Activated CD4-positive, alpha-beta T cell treated with anti-CD3 and anti-CD28 coated beads, Interleukin-2, amount 10 ng/mL, durations not matched to agents 24 days and 14 days (primary cell): ENCODE measurements at regions of chr12 and their contacts with region 1.

Region 1: DNA sequence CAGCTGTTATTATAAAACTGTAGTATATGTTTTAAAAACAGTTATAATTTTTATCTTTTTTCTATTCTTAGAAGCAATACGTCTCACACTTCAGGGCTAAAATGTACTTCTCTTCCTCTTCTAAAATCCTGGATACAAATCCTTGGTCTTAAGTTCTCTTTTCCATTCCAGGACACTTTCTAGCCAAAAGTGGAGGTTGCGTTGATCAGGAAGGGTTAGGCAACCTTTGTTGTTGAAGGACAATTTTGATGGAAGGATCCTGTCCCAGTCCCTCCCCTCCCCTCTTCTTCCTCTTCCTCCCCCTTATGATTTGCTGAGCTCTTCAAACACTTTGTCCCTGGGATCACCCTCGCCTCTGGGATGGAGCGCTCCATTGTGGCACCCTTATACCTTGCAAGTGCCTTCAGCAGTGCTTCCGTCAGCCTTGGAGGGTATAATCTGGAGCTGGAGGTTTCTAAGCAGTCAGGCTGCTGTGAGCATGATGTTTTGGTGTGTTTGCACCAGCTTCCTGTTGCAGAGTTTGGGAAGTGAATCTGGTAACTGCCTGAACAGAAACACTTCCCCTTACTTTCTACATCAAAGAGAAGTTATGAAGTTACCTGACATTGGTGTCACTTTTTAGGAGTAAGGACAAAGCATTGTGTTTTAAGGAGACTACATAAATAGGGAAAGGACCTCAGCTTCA is 87.4 kb upstream of the SLC38A2 start:
- DNase-seq: peak; percentile 81
- H3K4me3 Mint-ChIP-seq: peak overlapping the region; percentile 85
- H3K27ac Mint-ChIP-seq: peak overlapping the region; percentile 99
- H3K4me1 Mint-ChIP-seq: peaks cover 53% of the 10 kb centered on the region
- H3K27me3 Mint-ChIP-seq: no peaks in the 10 kb centered on the region

Region 2: GRCh38 chr12:46217541-46218321 is 242.3 kb before region 1 on chr12:
- intact Hi-C with region 1: loop called (anchors 5 kb)
- DNase-seq: peak; percentile 92
- H3K4me3 Mint-ChIP-seq: peak overlapping the region; percentile 79
- H3K27ac Mint-ChIP-seq: peak overlapping the region; percentile 98
- H3K4me1 Mint-ChIP-seq: peaks cover 88% of the 10 kb centered on the region
- H3K27me3 Mint-ChIP-seq: no peaks in the 10 kb centered on the region

Region 3: DNA sequence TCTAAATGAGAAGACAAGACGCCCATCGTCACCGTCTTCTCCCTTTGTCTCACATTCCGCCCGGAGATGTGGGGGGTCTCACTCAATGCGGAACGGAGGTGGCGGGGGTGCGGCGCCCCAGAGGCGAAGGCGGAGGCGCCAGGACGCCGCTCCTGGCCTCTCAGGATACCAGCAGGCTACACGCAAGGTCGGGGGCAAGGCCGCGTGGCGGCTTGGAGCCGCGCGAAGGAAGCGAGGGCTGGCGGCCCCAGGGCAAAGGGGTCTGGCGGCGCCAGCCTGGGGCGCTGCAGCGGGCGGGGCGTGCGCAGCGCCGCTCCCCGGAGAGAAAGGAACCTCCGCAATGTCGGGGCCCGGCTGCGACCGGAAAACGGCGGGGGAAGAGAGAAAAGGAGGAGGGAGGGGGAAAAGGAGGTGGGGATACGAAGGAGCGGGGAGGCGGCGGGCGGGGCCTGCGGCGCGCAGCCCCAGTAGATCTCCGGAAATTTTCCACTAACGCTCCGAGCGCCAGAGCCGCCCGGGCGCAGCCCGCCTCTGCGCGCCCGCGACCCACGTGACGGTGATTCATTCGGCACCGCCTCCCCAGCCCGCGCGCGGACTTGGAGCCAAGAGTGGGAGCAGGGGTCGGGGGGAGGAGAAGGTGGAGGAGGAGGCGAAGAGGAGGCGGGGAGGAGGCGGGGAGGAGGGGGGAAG is 76.9 kb before region 1 on chr12:
- intact Hi-C with region 1: loop called (anchors 1 kb)
- DNase-seq: peak; percentile 99
- H3K4me3 Mint-ChIP-seq: peak overlapping the region; percentile 83
- H3K27ac Mint-ChIP-seq: peak overlapping the region; percentile 98
- H3K4me1 Mint-ChIP-seq: peaks cover 36% of the 10 kb centered on the region
- H3K27me3 Mint-ChIP-seq: no peaks in the 10 kb centered on the region

Region 4: GRCh38 chr12:46516933-46517578 is 57.1 kb after region 1 on chr12:
- intact Hi-C with region 1: loop called (anchors 1 kb)
- DNase-seq: peak; percentile 83
- H3K4me3 Mint-ChIP-seq: peak overlapping the region; percentile 80
- H3K27ac Mint-ChIP-seq: peak overlapping the region; percentile 95
- H3K4me1 Mint-ChIP-seq: peaks cover 71% of the 10 kb centered on the region
- H3K27me3 Mint-ChIP-seq: no peaks in the 10 kb centered on the region

Region 5: DNA sequence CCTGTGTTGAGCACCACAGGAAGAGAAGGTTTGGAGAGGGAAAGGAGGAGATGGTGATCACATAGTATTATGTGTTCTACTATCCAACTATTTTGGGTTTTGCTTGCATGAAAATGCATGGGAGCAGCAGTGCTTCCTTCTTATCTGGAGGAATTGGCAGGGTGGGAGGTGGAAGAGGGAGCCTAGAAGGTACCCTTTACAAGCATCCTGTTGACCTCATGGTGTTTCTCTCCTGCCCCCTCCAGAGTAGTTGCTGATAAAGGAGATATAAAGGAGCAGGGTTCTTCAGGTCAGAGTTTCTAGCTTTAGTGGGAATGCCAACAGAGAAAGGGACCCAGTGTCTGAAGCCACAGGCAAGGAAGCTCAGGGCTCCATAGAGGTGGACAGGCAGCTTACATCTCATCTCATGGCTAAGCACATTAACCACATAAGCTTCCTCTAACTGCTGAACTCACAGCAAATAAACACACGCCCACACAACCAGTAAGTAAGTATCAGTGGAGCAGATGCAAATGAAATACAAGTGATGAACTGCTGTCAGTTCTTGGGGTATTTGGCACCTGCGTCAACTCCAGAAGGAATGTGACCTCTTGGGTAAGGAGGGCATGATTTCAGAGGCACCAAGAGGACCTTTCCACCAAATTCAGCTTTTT is 86.8 kb after region 1 on chr12:
- intact Hi-C with region 1: loop called (anchors 1 kb)
- DNase-seq: peak; percentile 79
- H3K4me3 Mint-ChIP-seq: peak overlapping the region; percentile 55
- H3K27ac Mint-ChIP-seq: peak overlapping the region; percentile 88
- H3K4me1 Mint-ChIP-seq: peaks cover 62% of the 10 kb centered on the region
- H3K27me3 Mint-ChIP-seq: no peaks in the 10 kb centered on the region

Region 6: GRCh38 chr12:46661110-46661845 is 201.3 kb after region 1 on chr12:
- intact Hi-C with region 1: loop called (anchors 2 kb)
- DNase-seq: peak; percentile 76
- H3K4me3 Mint-ChIP-seq: no peak overlapping the region
- H3K27ac Mint-ChIP-seq: peak overlapping the region; percentile 45
- H3K4me1 Mint-ChIP-seq: peaks cover 35% of the 10 kb centered on the region
- H3K27me3 Mint-ChIP-seq: no peaks in the 10 kb centered on the region